Tibial artery (tissue), 4 donors: ENCODE measurements at regions of chr16 and their contacts with region 1.

Region 1: DNA sequence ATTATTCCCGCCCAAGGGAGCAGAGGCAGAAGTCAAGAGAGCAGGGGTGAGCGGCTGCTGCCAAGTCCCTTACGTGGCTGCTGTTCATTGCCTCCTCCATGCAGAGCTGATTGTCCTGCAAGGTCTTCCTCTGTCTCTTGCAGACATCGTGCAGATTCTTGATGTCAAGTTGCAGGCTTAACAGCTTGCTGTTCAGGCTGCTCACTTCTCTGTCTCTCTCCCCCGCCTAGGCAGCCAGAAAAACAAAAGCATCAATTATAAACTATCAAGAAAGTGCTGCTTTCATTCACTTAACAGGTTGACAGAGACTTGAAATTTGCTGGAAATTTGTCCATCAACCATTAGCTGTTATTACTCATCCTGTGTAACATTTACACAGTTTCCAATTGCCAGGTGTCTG is 7.3 kb downstream of the PMFBP1 start:
- DNase-seq: no peak
- H3K4me3 ChIP-seq: no peak overlapping the region
- H3K27ac ChIP-seq: no peak overlapping the region
- H3K4me1 ChIP-seq: no peaks in the 10 kb centered on the region
- H3K27me3 ChIP-seq: no peaks in the 10 kb centered on the region
- CTCF ChIP-seq: no peak

Region 2: DNA sequence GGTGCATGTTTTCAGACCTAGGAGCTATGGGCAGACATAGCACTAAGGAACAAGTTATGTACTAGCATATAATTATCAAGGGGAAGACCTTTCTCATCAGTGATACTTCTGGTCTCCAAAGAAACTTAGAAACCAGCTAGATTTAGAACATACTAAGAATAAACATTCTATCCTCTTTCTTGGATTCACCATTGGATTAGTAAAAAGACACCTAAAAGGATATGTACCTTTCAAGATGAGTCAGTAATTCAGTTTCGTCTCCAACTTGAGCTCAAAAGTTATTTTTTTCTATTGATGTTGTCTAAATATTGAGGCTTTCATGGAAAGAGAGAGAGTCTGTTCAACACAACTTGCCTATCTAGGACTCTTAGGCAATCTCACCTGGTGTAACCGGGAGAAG is 293.9 kb before region 1 on chr16:
- intact Hi-C with region 1: no loop called
- DNase-seq: no peak
- H3K4me3 ChIP-seq: no peak overlapping the region
- H3K27ac ChIP-seq: no peak overlapping the region
- H3K4me1 ChIP-seq: no peaks in the 10 kb centered on the region
- H3K27me3 ChIP-seq: no peaks in the 10 kb centered on the region
- CTCF ChIP-seq: no peak

Region 3: GRCh38 chr16:72300892-72301291 is 136.2 kb after region 1 on chr16:
- intact Hi-C with region 1: no loop called
- DNase-seq: no peak
- H3K4me3 ChIP-seq: no peak overlapping the region
- H3K27ac ChIP-seq: no peak overlapping the region
- H3K4me1 ChIP-seq: no peaks in the 10 kb centered on the region
- H3K27me3 ChIP-seq: no peaks in the 10 kb centered on the region
- CTCF ChIP-seq: no peak

Region 4: DNA sequence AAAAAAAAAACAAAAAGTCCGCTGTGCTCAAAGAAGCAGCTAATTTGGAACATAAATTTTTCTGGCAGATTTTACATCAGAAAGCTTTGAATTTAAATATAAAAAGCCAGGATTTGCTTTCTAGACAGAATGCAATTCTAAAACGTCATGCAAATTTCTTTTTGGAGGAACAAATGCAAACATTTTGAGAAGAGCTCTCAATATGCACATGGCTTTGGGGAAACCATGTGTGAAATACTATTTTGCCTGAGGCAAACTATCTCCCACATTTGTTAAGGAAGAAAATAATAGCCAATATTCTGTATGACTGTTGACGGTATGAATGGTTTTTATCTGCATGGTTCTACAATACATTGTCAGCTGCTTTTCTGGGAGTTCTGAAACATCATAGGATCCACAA is 1812.0 kb after region 1 on chr16:
- intact Hi-C with region 1: loop called (anchors 5 kb)
- DNase-seq: no peak
- H3K4me3 ChIP-seq: no peak overlapping the region
- H3K27ac ChIP-seq: no peak overlapping the region
- H3K4me1 ChIP-seq: no peaks in the 10 kb centered on the region
- H3K27me3 ChIP-seq: no peaks in the 10 kb centered on the region
- CTCF ChIP-seq: no peak